Transverse colon (tissue), 4 donors: ENCODE measurements at regions of chr5 and their contacts with region 1.

Region 1: GRCh38 chr5:157294407-157295091 is 28.6 kb downstream of the CYFIP2 start:
- DNase-seq: no peak
- H3K4me3 ChIP-seq: no peak overlapping the region
- H3K27ac ChIP-seq: no peak overlapping the region
- H3K4me1 ChIP-seq: peaks cover 0 to 5% (median 2%) of the 10 kb centered on the region in 4 donors
- H3K27me3 ChIP-seq: no peaks in the 10 kb centered on the region
- CTCF ChIP-seq: no peak
- EP300 ChIP-seq: no peak
- POLR2A ChIP-seq: no peak

Region 2: DNA sequence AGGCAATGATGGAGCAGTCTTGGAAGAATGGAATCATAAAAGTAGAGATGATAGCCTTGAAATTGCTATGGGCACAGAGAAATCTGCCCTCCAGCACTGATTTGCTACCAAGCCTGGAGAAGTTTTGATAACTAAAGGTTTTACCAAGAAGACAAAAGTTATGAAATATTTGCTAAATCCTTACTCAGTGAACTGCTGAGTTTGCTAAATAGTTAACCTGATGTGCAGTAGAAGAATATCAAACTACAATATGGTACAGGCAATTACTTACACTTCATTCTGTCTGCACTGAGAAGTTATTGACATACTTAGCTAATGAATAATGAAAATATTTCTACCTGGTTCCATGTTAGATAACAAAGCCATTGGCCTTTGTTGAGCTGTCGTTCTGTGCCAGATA is 843.0 kb before region 1 on chr5:
- in situ Hi-C with region 1: no loop called
- intact Hi-C with region 1: loop called (anchors 5 kb)
- DNase-seq: no peak
- H3K4me3 ChIP-seq: no peak overlapping the region
- H3K27ac ChIP-seq: no peak overlapping the region
- H3K4me1 ChIP-seq: peaks cover 0 to 3% (median 0%) of the 10 kb centered on the region in 4 donors
- H3K27me3 ChIP-seq: no peaks in the 10 kb centered on the region
- CTCF ChIP-seq: no peak
- EP300 ChIP-seq: no peak
- POLR2A ChIP-seq: no peak

Region 3: GRCh38 chr5:157265714-157266285 is 28.7 kb before region 1 on chr5 and contains the start of gene CYFIP2:
- in situ Hi-C with region 1: no loop called
- intact Hi-C with region 1: no loop called
- DNase-seq: peak; percentile 80
- H3K4me3 ChIP-seq: peak within 1 kb of the TSS; percentile 68 to 89 (median 80)
- H3K27ac ChIP-seq: peak within 1 kb of the TSS; percentile 70 to 83 (median 76)
- H3K4me1 ChIP-seq: peaks cover 4 to 28% (median 14%) of the 10 kb centered on the region in 4 donors
- H3K27me3 ChIP-seq: no peaks in the 10 kb centered on the region
- CTCF ChIP-seq: no peak
- EP300 ChIP-seq: no peak
- POLR2A ChIP-seq: no peak
- total RNA-seq, gene CYFIP2: 34.0 to 134 (median 41.6) TPM

Region 4: DNA sequence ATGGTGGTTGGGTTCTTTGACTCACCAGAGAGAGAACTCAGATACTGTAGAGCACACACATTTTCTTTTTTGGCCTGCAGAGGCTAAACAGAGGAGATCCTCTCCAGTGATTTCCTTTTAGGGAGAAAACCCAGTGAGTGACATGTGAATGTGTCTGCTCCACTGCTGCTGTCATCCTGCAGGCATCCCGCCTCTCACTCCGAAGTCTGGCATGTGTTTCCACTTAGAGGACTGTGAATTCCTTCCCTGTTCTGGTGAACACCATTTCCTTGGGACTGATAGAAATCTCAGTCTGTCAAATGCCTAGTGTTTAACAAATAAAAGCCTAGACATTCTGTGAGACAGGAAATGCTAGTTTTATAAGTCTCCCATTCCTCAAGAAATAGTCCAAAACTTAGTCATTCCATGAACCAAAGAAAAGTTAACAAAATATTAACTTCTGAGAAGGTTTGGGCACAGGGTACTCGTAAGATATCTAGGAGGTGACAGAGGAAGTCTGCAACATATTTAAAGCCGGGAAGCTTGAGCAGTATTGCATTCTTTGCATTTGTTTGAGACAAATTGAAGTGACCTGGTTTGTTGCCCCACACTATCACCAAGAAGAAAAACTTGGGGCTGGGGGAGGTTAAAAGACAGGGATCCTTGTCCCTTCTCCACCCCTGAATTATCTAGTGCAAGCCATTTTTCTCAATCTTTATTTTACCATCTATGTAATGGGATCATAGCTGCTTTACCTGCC is 90.6 kb after region 1 on chr5:
- in situ Hi-C with region 1: no loop called
- intact Hi-C with region 1: no loop called
- DNase-seq: peak; percentile 27
- H3K4me3 ChIP-seq: no peak overlapping the region
- H3K27ac ChIP-seq: peak overlapping the region; percentile 77 to 87 (median 84)
- H3K4me1 ChIP-seq: peaks cover 0 to 22% (median 8%) of the 10 kb centered on the region in 4 donors
- H3K27me3 ChIP-seq: no peaks in the 10 kb centered on the region
- CTCF ChIP-seq: no peak
- EP300 ChIP-seq: no peak
- POLR2A ChIP-seq: no peak